Left colon (tissue), 2 donors: ENCODE measurements at regions of chr10 and their contacts with region 1.

Region 1: GRCh38 chr10:98309366-98310355 is 41.7 kb upstream of the LOXL4 start:
- DNase-seq: peak; percentile 48 to 73
- ATAC-seq: peak; percentile 98

Region 2: GRCh38 chr10:97759158-97759887 is 550.3 kb before region 1 on chr10:
- intact Hi-C with region 1: no loop called
- DNase-seq: peak in 1 of 2 donors; percentile 72
- ATAC-seq: peak; percentile 73

Region 3: DNA sequence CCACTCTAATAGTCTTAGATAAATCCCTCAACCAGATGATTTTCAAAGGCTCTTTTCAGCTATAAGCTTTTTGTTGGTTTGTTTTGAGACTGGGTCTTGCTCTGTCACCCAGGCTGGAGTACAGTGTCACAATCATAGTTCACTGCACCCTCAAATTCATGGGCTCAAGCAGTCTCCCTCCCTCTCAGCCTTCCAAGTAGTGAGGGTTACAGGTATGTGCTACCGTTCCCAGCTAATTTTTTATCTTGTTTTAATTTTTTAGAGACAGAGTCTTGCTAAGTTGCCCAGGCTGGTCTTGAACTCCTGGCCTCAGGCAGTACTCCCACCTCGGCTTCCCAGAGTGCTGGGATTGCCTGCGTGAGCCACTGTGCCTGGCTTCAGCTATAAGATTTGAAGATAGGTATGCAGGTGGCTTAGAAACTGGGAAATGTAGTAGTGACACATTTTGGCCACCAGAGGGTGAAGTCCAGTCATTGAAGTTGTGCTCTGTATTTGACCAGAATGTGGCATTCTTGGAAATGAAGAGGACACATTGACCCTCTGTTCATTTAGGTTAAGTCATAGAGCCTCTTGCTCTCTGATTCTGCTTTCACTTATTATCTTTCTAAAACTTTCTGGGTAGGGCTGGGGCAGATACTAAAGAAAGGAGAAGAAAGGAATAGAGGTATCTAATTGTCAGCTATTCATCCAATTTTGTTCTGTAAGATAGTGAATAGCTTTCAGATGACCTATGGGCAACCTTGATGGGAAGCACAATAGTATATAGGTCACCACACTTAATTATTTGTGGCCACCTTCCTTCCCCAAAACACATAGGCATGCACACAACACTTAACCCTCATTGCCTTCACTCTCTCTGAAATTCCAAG is 139.2 kb before region 1 on chr10:
- intact Hi-C with region 1: loop called in 1 of 2 experiments (anchors 2 kb)
- DNase-seq: peak in 1 of 2 donors; percentile 32
- ATAC-seq: peak; percentile 82

Region 4: DNA sequence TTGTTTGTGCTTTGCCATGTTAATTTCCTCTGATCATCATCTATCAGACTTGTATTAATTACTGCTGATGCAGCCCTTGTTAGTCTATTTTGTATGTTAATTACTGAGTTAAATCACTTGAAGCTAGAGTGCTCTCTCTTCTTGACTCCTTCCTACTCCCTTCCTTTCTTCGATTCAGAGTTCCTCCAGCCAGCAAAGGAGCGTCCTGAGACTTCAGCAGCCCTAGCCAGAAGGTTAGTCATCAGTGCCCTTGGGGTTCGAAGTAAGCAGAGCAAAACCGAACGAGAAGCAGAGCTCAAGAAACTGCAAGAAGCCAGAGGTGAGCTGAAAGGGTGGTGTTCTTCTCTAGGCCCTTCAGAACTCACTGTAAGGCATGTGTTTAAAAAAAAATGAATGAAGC is 73.8 kb before region 1 on chr10:
- intact Hi-C with region 1: no loop called
- DNase-seq: no peak
- ATAC-seq: no peak

Region 5: GRCh38 chr10:98414932-98415730 is 105.5 kb after region 1 on chr10 and contains the start of gene PYROXD2:
- intact Hi-C with region 1: no loop called
- DNase-seq: peak; percentile 93 to 95
- ATAC-seq: peak; percentile 95
- total RNA-seq, gene PYROXD2: 6.0 to 13.4 TPM

Region 6: DNA sequence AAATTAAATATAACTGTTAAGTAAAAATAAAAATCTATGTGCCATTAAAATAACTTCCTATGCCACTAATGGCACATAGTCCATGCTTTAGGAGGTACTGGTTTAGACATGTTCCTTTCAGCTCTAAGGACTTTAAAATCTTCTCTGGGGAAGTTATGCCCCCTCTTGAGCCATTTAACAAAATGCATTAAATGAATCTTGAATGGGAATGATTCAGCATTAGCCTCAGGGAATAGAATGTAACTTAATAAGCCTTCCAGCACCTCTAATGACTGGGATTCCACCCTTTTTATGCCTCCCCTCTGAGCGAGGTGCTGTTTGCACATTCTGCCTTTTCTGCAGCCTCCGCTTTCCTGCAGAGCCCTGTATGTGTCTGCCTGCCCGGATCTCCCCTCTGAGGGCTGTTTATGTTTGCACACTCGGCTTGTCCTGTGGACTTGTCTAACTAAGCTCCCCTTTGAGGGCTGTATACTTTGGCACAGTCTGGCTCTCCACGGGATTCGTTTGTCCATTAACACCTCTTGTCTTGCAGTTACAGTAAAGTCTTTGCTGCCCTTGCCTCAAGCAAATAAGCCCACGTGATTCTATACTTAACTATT is 245.5 kb after region 1 on chr10:
- intact Hi-C with region 1: no loop called
- DNase-seq: no peak
- ATAC-seq: no peak